Right ventricle myocardium superior (tissue), 1 donor: ENCODE measurements at regions of chr3 and their contacts with region 1.

Region 1: DNA sequence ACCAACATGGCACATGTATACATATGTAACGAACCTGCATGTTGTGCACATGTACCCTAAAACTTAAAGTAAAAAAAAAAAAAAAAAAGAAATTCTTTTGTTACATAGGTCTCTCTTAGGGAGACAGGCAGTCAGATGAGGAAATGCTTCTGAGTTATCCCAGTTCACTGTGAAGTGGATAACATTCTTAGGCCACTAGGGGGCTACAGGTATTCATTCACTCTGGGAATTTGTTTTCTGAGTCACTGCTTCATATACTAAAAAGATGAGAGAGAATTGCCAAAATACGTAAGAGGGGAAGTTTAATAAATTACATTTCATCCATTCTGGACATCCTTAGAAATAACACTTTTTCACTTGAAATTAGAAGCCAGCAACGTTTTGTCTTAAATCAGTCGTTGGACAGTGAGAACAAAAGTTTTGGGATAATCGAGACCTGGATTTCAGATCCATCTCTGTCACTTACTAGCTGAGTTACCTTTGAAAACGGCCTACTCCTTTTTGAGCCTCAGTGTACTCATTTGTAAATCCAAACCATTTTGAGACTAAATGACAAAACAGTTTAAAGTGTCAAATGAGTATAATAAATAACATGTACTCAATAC is 738.4 kb upstream of the ALCAM start:
- DNase-seq: no peak
- ATAC-seq: no peak

Region 2: GRCh38 chr3:105366326-105367062 is 738.2 kb after region 1 on chr3 and contains the start of gene ALCAM:
- intact Hi-C with region 1: loop called (anchors 10 kb)
- DNase-seq: peak; percentile 93
- ATAC-seq: peak; percentile 95
- total RNA-seq, gene ALCAM: 3.5 TPM